ENCODE measurements at regions of chr3 and their contacts with region 1.

Region 1: DNA sequence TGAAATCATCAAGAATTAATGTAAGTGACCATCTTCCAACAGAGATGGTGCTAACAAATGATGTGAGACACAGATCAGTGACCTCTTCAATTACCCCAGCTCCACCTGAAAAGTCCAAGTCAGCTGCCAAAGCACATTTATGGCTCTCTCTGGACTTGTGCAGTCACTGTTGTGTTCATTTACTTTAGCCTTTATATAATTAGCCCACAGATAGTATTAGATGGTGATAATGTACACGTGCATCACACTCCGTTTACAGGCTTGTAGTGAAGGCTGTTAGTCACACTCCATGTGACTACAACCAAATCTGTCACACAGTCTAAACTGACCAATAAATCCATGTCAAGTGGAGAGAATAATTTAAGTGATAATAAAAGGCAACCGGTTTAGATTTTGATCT is 331.5 kb upstream of the IL12A start:
- DNase-seq: no peak
- ATAC-seq: no peak

Region 2: GRCh38 chr3:159513867-159514380 is 143.3 kb before region 1 on chr3:
- intact Hi-C with region 1: no loop called
- DNase-seq: no peak
- ATAC-seq: no peak

Region 3: GRCh38 chr3:159679900-159680299 is 22.7 kb after region 1 on chr3:
- intact Hi-C with region 1: loop called (anchors 1 kb)
- DNase-seq: no peak
- ATAC-seq: no peak

Region 4: DNA sequence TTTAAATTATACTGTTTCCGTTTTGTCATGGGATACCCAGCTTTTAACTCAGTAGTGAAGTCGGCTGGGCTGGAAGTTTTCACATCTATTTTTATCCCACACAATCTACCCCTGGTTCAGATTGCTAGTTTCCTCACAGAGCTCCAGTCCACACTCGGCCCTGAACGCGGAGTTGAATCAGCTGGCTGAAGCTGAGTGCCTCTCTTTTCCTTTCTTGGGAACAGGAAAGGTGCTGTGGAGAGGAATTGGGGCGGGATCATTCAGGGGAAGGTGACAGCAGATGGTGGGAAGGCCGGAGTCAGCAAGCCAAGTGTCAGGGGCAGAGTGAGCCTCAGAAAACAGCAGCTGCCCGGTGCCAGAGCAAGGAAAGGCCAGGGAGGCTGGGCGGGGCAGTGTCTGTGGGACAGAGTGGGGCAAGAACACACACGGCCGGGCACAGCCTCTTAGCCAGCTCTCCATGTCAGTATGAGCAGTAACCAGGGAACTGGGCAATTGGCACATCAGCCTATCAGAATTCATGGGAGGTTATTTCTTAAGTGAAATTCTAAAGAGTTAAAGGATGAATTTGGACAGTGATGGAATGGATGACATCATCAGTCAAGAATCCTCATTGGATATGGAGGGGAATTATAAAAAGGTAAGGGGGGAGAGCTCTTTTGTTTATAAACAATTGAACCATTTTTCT is 195.8 kb after region 1 on chr3:
- intact Hi-C with region 1: no loop called
- DNase-seq: peak; percentile 67
- ATAC-seq: peak; percentile 66